Activated T-helper 1 cell treated with anti-CD3 and anti-CD28 coated beads, Interleukin-12 subunit alpha, Interleukin-12 subunit beta, Interleukin-2, Interleukin-4 antibody, amounts not matched to agents 30 ng/mL and 10 ng/mL and 1 ng/mL, durations not matched to agents 14 hours and 24 hours and 36 hours (primary cell): ENCODE measurements at regions of chr1 and their contacts with region 1.

Region 1: DNA sequence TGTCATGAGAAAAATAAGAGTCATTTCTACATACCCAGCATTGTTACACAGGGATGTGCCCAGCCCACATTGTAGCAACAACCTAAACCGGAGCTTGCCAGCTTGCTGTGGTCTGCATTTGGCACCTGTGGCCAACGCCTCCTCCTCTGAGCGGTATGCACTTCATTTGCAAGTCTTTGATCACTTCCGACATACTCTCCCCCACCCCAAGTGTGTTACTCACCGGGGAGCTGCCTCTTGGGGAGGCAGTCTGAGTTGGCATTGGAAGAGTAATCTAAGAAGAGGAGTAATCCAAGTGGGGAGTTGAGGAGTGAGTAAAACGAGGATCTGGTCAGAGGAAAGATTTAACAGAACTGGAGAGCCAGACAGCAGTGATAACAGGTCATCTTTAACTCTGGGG is 3.8 kb downstream of the BCL9 start:
- DNase-seq: peak; percentile 67
- H3K4me3 Mint-ChIP-seq: peak overlapping the region; percentile 50
- H3K27ac Mint-ChIP-seq: peak overlapping the region; percentile 70
- H3K4me1 Mint-ChIP-seq: peaks cover 20% of the 10 kb centered on the region
- H3K27me3 Mint-ChIP-seq: peaks cover 4% of the 10 kb centered on the region

Region 2: GRCh38 chr1:147172168-147172992 is 372.8 kb before region 1 on chr1 and contains the start of gene PRKAB2:
- intact Hi-C with region 1: loop called (anchors 2 kb)
- DNase-seq: peak; percentile 86
- H3K4me3 Mint-ChIP-seq: peak within 1 kb of the TSS; percentile 96
- H3K27ac Mint-ChIP-seq: peak within 1 kb of the TSS; percentile 94
- H3K4me1 Mint-ChIP-seq: peaks cover 31% of the 10 kb centered on the region
- H3K27me3 Mint-ChIP-seq: peaks cover 2% of the 10 kb centered on the region
- total RNA-seq, gene PRKAB2: 8.0 and 9.3 TPM in 2 replicates

Region 3: GRCh38 chr1:147494998-147495580 is 50.0 kb before region 1 on chr1:
- intact Hi-C with region 1: loop called (anchors 2 kb)
- DNase-seq: peak; percentile 60
- H3K4me3 Mint-ChIP-seq: no peak overlapping the region
- H3K27ac Mint-ChIP-seq: no peak overlapping the region
- H3K4me1 Mint-ChIP-seq: peaks cover 7% of the 10 kb centered on the region
- H3K27me3 Mint-ChIP-seq: peaks cover 6% of the 10 kb centered on the region

Region 4: GRCh38 chr1:147599362-147600118 is 54.4 kb after region 1 on chr1:
- intact Hi-C with region 1: loop called (anchors 1 kb)
- DNase-seq: peak; percentile 89
- H3K4me3 Mint-ChIP-seq: peak overlapping the region; percentile 87
- H3K27ac Mint-ChIP-seq: peak overlapping the region; percentile 79
- H3K4me1 Mint-ChIP-seq: peaks cover 34% of the 10 kb centered on the region
- H3K27me3 Mint-ChIP-seq: peaks cover 20% of the 10 kb centered on the region

Region 5: DNA sequence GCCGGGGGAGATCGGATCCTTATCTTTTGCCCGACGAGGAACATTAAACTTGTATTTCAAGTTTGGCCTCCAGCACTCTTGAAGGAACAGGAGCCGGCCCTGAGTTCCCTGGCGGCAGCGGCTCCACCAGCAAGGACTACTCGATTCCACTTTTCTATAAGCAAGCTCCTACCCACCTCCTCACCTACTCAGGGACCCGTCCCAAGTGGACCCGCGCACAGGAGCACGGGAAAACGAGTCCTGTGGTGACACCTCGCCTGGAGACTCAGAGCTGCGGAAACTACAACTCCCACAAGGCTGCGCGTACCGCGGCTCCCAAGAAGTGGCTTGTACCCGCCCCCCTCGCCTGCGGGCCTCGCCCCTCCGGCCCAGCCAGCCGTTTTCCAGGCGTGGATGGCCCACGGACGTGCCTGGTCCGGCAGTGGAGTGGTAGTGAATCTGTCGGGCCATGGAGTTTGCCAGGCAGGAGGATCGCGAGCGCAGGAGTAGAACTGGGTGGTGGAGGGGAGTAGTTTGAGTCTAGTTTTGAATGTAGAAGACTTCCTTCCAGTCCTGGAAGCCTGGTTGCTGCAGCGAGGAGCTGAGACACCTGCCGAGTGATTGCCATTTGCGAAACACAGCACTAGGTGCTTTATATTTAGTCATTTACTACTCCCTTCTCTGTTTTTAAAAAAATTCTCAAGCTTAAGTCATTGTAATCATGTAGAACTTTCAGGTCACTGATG is 125.3 kb after region 1 on chr1 and contains the start of gene ACP6:
- intact Hi-C with region 1: loop called (anchors 5 kb)
- DNase-seq: peak; percentile 86
- H3K4me3 Mint-ChIP-seq: peak within 1 kb of the TSS; percentile 92
- H3K27ac Mint-ChIP-seq: peak within 1 kb of the TSS; percentile 88
- H3K4me1 Mint-ChIP-seq: peaks cover 24% of the 10 kb centered on the region
- H3K27me3 Mint-ChIP-seq: peaks cover 24% of the 10 kb centered on the region
- total RNA-seq, gene ACP6: 14.1 and 14.7 TPM in 2 replicates